ENCODE measurements at regions of chr1 and their contacts with region 1.

Region 1: DNA sequence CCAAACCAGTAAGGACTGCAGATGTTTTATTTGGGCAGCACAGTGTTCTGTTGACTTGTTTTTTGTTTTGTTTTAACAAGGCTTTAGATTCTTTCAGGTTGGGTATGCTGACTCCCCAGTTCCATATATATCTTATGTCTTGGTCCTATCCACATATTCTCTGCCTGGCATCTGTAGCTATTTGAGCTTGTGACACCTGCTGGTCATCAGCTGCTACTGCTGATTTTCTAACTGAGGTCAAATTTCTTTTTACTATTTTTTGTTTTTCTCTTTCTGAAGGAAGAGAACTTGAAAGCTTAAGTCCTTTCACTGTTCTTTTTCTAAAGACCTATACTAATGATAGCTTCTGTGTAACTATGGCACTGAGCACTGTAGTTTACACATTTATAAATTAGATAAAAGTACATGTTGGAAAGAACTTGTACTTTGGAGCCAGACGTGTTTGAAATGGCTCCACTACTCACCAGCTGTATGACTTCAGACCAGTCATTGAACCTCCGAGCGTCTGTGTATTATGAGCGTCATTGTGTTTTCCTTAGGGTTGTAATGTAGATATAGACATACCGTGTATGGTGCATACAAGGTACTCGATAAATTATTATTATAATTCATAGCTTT is 109.4 kb downstream of the NRDC start:
- DNase-seq: peak; percentile 60
- CTCF ChIP-seq: peak; percentile 53

Region 2: GRCh38 chr1:51421964-51422363 is 347.1 kb before region 1 on chr1:
- CTCF ChIA-PET with region 1: no interaction called
- POLR2A ChIA-PET with region 1: no interaction called
- DNase-seq: no peak
- CTCF ChIP-seq: no peak

Region 3: DNA sequence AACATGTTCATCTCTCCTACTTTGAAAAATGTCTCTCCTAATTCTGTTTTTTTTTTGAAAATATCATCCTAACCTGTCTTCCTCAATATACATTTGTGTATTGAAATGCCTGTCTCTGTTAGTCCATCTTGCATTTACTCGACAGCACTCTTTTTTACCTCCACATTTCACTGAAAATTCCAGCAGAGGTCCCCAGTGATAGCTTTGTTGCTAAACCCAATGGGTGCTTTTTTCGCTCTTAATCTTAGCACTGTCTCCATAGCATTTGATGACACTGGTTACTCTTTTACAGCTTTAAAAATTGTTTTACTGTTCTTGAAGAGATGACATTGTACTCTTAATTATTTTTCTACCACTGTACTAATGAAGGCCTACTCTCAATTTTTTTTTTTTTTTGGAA is 141.4 kb before region 1 on chr1:
- CTCF ChIA-PET with region 1: interaction called, 14 read pairs
- POLR2A ChIA-PET with region 1: no interaction called
- DNase-seq: peak; percentile 35
- CTCF ChIP-seq: peak; percentile 20

Region 4: DNA sequence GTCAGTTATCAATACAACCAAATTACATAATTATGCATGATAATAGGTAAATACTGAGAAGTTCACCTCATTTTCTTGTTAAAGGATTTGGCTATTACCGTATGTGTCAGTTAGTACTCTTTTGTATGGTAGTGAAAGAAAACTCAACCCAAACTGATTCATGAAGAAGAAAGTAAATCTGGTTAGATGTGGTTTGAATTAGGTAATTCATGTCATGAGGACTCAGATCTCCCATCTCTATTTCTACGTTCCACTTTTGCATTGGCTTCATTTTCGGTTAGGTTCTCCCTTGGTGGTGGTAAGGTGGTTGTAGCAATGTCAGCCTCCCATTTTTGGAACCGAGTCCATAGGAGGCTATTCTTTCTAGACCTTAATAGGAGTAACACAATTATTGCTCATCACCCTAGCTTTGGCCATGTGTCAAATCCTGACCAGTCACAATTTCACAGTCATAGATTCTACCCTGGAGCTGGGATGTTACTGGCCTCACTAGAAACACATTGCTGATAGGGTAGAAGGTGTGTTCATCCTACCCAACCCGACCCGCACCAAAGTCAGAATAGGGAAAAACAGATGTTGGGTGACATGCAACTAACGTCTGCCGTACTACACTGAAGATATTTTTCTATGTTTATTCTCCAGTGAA is 54.6 kb before region 1 on chr1:
- CTCF ChIA-PET with region 1: interaction called, 11 read pairs
- POLR2A ChIA-PET with region 1: no interaction called
- DNase-seq: no peak
- CTCF ChIP-seq: no peak

Region 5: DNA sequence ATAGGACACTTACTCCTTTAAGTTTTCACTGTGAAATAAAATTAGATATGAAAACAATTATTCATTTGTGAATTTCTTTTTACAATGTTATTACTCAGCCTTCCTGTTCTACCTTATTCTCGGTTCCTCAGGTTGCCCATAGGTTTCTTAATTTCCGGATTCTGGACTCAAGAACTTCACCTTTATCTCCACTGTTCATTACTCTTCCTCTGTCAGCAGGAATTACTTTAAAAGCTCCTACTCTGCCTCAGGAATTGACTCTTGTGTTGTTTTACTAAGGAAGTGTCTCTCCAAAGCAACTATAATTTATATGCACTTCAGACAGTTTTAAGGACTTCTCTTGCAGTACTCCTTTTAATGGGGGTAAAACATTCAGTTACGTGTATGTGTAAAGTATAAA is 28.4 kb before region 1 on chr1:
- CTCF ChIA-PET with region 1: interaction called, 22 read pairs
- POLR2A ChIA-PET with region 1: no interaction called
- DNase-seq: no peak
- CTCF ChIP-seq: no peak

Region 6: DNA sequence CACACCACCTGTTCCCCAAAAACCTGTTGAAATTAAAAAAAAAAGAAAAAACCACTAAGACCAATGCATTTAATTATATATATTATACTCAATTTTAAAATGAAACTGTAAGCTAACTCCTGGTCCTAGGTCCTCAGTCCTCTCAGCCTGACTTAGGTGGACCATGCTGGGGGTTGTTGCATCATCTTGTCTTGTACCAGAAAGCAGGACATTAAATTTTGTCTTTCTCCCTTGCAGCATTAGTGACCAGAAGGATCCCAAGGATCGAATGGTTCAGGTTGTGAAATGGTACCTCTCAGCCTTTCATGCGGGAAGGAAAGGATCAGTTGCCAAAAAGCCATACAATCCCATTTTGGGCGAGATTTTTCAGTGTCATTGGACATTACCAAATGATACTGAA is 11.8 kb after region 1 on chr1:
- CTCF ChIA-PET with region 1: interaction called, 12 read pairs
- POLR2A ChIA-PET with region 1: no interaction called
- DNase-seq: no peak
- CTCF ChIP-seq: no peak

Region 7: GRCh38 chr1:51799372-51799771 is 30.3 kb after region 1 on chr1:
- CTCF ChIA-PET with region 1: interaction called, 27 read pairs
- POLR2A ChIA-PET with region 1: no interaction called
- DNase-seq: peak; percentile 12
- CTCF ChIP-seq: no peak

Measured in GM10248 (cell line).